SK-N-SH (cell line): ENCODE measurements at regions of chr6 and their contacts with region 1.

Region 1: GRCh38 chr6:133923938-133924593 is 29.0 kb upstream of the TBPL1 start:
- DNase-seq: peak; percentile 62
- H3K4me3 ChIP-seq: no peak overlapping the region; a peak in 1 of 4 replicates
- H3K27ac ChIP-seq: no peak overlapping the region
- H3K4me1 ChIP-seq: no peaks in the 10 kb centered on the region
- H3K27me3 ChIP-seq: peaks cover 17% of the 10 kb centered on the region
- CTCF ChIP-seq: peak; percentile 90
- EP300 ChIP-seq: no peak
- RAD21 ChIP-seq: peak; percentile 98

Region 2: DNA sequence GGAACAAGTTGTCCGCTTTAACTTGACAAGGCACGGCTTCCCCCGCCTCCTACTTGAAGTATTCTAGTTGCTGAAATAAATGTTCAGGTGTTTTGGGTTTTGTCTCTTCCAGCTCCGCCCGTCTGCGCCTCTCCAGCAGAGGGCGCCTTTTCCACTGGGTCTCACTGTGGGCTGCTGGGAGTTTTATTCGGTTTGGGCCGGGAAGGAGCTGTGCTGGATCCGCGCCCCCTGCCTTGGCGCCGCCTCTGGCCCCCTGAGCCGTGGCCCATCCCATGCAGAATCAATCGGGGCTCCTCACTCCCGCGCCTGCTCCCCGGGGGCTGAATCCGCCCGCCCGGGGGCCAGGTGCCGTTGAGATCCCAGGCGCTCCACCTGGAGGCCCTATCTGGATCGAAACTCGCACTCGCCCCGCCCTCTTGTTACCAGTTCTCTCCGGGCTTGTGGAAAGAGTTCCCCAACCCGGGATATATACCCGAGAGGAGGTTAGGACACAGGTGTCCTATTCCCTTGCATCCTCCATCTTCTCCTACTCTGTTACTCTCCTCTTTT is 86.2 kb before region 1 on chr6:
- CTCF ChIA-PET with region 1: interaction called, 10 read pairs
- POLR2A ChIA-PET with region 1: no interaction called
- DNase-seq: peak; percentile 49
- H3K4me3 ChIP-seq: peak overlapping the region; percentile 42 to 61
- H3K27ac ChIP-seq: no peak overlapping the region
- H3K4me1 ChIP-seq: no peaks in the 10 kb centered on the region; a peak in 1 of 4 replicates
- H3K27me3 ChIP-seq: peaks cover 27% of the 10 kb centered on the region
- CTCF ChIP-seq: peak; percentile 66
- EP300 ChIP-seq: no peak
- RAD21 ChIP-seq: peak; percentile 44

Region 3: GRCh38 chr6:133945158-133945557 is 21.1 kb after region 1 on chr6:
- CTCF ChIA-PET with region 1: interaction called, 41 read pairs
- POLR2A ChIA-PET with region 1: no interaction called
- DNase-seq: no peak
- H3K4me3 ChIP-seq: no peak overlapping the region
- H3K27ac ChIP-seq: no peak overlapping the region
- H3K4me1 ChIP-seq: peaks cover 0 to 2% of the 10 kb centered on the region in 2 experiments; a peak in 1 of 4 replicates
- H3K27me3 ChIP-seq: peaks cover 4% of the 10 kb centered on the region; the same call in 1 of the 2 replicates
- CTCF ChIP-seq: no peak
- EP300 ChIP-seq: no peak
- RAD21 ChIP-seq: no peak

Region 4: GRCh38 chr6:133966654-133967329 is 42.7 kb after region 1 on chr6:
- CTCF ChIA-PET with region 1: interaction called, 21 read pairs
- POLR2A ChIA-PET with region 1: no interaction called
- DNase-seq: no peak
- H3K4me3 ChIP-seq: no peak overlapping the region
- H3K27ac ChIP-seq: no peak overlapping the region
- H3K4me1 ChIP-seq: peaks cover 6 to 8% of the 10 kb centered on the region in 2 experiments; a peak in 3 of 4 replicates
- H3K27me3 ChIP-seq: no peaks in the 10 kb centered on the region
- CTCF ChIP-seq: no peak
- EP300 ChIP-seq: no peak
- RAD21 ChIP-seq: no peak

Region 5: DNA sequence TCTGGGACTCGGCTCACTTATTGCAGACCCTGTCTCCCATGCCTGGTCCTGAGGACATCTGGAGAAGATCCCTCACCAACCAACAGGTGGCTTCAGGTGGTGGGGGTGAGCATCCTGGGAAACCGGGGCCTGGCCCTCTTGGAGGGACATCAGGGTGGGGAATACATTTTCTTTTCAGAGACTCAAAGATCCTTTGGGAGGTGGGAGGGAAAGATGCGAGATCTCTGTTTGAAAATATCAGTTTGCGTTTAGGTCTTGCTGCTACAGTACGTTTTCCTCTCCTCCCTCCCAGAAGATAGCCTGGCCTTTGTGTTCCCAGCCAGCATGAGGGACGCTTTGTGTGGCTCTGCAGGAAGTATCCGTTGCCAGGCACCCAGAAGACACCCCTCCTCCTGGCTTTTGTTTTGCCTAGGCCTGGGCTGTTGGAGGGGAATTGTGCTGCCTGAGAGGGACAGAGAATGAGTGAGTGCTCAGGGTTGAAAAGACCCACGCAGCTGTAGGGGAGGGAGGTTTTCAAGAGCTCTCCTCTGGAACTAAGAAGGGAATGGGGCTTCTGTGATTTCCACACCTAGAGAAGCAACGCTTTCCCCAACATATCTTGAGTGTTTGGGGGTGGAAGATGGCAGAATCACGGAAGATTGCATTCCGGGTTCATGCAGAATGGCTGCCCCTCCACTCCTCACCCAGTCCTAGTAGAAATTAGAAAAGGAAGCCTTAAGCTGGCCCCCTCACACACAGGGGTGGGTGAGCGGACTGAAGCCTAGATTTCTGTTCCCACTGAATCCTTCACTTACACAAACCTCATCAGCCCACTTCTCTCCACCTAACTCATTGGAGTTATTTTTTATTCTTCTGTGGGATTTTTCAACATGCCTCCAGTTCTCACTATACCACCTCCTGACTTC is 150.3 kb after region 1 on chr6:
- CTCF ChIA-PET with region 1: interaction called, 49 read pairs
- POLR2A ChIA-PET with region 1: no interaction called
- DNase-seq: no peak
- H3K4me3 ChIP-seq: no peak overlapping the region
- H3K27ac ChIP-seq: no peak overlapping the region
- H3K4me1 ChIP-seq: no peaks in the 10 kb centered on the region; a peak in 1 of 4 replicates
- H3K27me3 ChIP-seq: no peaks in the 10 kb centered on the region; the same call in 1 of the 2 replicates
- CTCF ChIP-seq: no peak
- EP300 ChIP-seq: no peak
- RAD21 ChIP-seq: no peak

Region 6: DNA sequence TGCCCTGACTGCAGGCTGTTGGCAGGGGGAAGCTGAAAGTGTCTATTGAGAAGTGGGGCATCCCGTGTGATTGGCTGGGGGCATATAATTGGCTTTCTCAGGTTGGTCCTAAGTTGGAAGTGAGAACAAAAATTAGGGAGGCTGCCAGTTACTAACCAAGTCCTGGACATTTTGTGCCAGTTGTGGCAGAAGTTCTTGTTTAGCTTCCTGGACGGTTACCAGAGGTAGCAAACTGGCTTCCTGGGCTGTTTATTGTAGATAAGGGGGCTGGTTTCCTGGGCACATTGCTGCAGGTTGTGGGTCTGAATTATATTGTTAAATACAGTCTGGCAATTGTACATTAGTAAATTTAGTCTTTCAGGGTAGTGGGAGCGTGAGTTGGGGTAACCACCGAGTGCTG is 178.9 kb after region 1 on chr6:
- CTCF ChIA-PET with region 1: interaction called, 484 read pairs
- POLR2A ChIA-PET with region 1: no interaction called
- DNase-seq: no peak
- H3K4me3 ChIP-seq: no peak overlapping the region
- H3K27ac ChIP-seq: no peak overlapping the region
- H3K4me1 ChIP-seq: peaks cover 0 to 8% of the 10 kb centered on the region in 2 experiments; a peak in 2 of 4 replicates
- H3K27me3 ChIP-seq: no peaks in the 10 kb centered on the region; the same call in 1 of the 2 replicates
- CTCF ChIP-seq: no peak
- EP300 ChIP-seq: no peak
- RAD21 ChIP-seq: no peak

Region 7: DNA sequence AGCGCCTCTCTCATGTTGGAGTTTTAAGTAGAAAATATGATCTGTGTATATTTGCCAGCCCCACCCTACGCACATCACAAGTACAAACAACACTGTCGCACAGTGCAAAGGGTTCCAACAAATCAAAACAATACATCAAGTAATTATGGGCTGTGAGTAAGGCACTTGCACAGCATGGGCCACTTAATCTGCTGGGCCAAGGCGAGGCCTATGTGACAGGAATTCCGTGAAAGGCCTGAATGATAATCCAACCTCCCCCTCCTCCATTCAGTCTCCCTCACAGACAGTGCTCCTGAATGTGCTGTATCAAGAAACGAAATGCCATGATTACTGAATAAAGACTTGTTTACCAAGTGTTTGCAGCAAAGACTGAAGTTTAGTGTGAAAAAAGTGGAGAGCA is 258.5 kb after region 1 on chr6:
- CTCF ChIA-PET with region 1: no interaction called
- POLR2A ChIA-PET with region 1: no interaction called
- DNase-seq: no peak
- H3K4me3 ChIP-seq: no peak overlapping the region
- H3K27ac ChIP-seq: no peak overlapping the region
- H3K4me1 ChIP-seq: no peaks in the 10 kb centered on the region
- H3K27me3 ChIP-seq: no peaks in the 10 kb centered on the region
- CTCF ChIP-seq: no peak
- EP300 ChIP-seq: no peak
- RAD21 ChIP-seq: no peak